Activated B cell treated with CpG ODN at 0.5 μM for 24 hours (primary cell): ENCODE measurements at regions of chr2 and their contacts with region 1.

Region 1: GRCh38 chr2:70994756-70995729 is at the start of gene TEX261:
- DNase-seq: peak; percentile 96
- ATAC-seq: peak; percentile 96
- H3K4me3 Mint-ChIP-seq: peak within 1 kb of the TSS; percentile 96
- H3K27ac Mint-ChIP-seq: peak within 1 kb of the TSS; percentile 87
- H3K4me1 Mint-ChIP-seq: peaks cover 33% of the 10 kb centered on the region
- H3K27me3 Mint-ChIP-seq: no peaks in the 10 kb centered on the region
- CTCF ChIP-seq: no peak
- total RNA-seq, gene TEX261: 46.8 and 54.1 TPM in 2 replicates

Region 2: DNA sequence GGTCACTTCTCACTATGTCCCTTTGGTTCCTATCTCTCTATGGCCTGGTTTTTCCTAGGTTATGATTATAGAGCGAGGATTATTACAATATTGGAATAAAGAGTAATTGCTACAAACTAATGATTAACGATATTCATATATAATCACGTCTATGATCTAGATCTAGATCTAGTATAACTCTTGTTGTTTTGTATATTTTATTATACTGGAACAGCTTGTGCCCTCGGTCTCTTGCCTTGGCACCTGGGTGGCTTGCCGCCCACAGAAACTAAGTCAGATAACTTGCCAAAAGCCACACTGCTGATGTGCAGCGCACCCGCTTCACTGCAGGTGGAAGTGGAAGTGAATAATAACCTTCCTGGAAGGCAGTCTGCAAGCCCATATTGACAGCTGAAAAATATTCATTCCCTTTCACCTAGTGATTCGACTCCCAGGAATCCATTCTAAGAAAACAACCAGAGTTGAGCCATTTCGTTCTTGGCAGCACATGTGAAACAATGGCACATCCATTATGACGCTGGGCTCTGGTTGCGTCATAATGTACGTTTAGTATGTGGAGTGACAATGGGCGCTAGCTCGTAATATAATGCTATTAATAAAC is 17.3 kb before region 1 on chr2:
- CTCF ChIA-PET with region 1: no interaction called
- POLR2A ChIA-PET with region 1: interaction called, 4 read pairs
- intact Hi-C with region 1: loop called (anchors 1 kb)
- DNase-seq: no peak
- ATAC-seq: peak; percentile 35
- H3K4me3 Mint-ChIP-seq: peak overlapping the region; percentile 92
- H3K27ac Mint-ChIP-seq: peak overlapping the region; percentile 87
- H3K4me1 Mint-ChIP-seq: peaks cover 16% of the 10 kb centered on the region
- H3K27me3 Mint-ChIP-seq: peaks cover 4% of the 10 kb centered on the region
- CTCF ChIP-seq: no peak

Region 3: DNA sequence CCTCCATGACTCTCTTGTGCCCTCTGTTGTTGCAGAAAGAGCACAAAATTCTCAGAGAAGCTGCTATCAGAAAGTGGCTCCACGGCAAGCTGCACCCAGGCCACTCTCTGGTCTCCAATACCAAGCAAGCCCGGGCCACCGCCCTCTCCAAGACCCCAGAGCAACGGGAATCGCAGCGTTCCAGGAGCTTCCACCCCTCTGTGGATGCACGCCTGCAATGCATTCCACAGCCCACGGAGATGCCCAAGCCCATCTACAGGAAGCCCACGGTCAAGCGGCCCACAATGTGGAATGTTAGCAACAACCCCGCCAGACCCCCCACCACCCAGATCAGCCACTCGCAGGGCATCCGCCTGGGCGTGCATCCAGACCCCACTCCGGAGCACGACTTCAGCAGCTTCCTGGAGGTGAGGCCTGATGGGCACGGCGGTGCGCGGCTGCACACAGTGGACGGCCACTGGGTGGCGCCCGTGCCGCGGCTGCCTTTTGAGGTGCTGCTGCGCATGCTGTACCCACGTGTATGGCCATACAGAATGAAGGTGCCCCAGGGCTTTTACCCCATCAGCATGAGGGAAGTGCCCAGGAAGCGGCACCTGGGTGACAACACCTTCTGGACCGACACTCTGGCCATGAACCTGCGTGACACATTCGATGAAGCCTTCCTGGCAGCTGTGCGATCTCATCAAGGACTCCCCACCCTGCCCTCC is 10.3 kb before region 1 on chr2:
- CTCF ChIA-PET with region 1: interaction called, 3 read pairs
- POLR2A ChIA-PET with region 1: interaction called, 5 read pairs
- intact Hi-C with region 1: loop called (anchors 1 kb)
- DNase-seq: peak; percentile 52
- ATAC-seq: peak; percentile 94
- H3K4me3 Mint-ChIP-seq: no peak overlapping the region
- H3K27ac Mint-ChIP-seq: no peak overlapping the region
- H3K4me1 Mint-ChIP-seq: peaks cover 4% of the 10 kb centered on the region
- H3K27me3 Mint-ChIP-seq: no peaks in the 10 kb centered on the region
- CTCF ChIP-seq: no peak

Region 4: GRCh38 chr2:71049365-71050360 is 54.6 kb after region 1 on chr2:
- CTCF ChIA-PET with region 1: no interaction called
- POLR2A ChIA-PET with region 1: no interaction called
- intact Hi-C with region 1: no loop called
- DNase-seq: no peak
- ATAC-seq: peak; percentile 82
- H3K4me3 Mint-ChIP-seq: no peak overlapping the region
- H3K27ac Mint-ChIP-seq: no peak overlapping the region
- H3K4me1 Mint-ChIP-seq: peaks cover 7% of the 10 kb centered on the region
- H3K27me3 Mint-ChIP-seq: no peaks in the 10 kb centered on the region
- CTCF ChIP-seq: no peak